ENCODE measurements at regions of chr20 and their contacts with region 1.

Region 1: GRCh38 chr20:37990571-37991151 is 42.6 kb downstream of the TTI1 start:
- DNase-seq: peak; percentile 75 to 79
- ATAC-seq: peak in 1 of 2 donors; percentile 2
- H3K4me3 ChIP-seq: no peak overlapping the region
- H3K27ac ChIP-seq: peak overlapping the region; percentile 84 to 93 (median 90)
- H3K4me1 ChIP-seq: peaks cover 91 to 94% of the 10 kb centered on the region in 2 donors
- H3K27me3 ChIP-seq: no peaks in the 10 kb centered on the region
- CTCF ChIP-seq: no peak
- POLR2A ChIP-seq: peak in 1 of 2 donors; percentile 29

Region 2: DNA sequence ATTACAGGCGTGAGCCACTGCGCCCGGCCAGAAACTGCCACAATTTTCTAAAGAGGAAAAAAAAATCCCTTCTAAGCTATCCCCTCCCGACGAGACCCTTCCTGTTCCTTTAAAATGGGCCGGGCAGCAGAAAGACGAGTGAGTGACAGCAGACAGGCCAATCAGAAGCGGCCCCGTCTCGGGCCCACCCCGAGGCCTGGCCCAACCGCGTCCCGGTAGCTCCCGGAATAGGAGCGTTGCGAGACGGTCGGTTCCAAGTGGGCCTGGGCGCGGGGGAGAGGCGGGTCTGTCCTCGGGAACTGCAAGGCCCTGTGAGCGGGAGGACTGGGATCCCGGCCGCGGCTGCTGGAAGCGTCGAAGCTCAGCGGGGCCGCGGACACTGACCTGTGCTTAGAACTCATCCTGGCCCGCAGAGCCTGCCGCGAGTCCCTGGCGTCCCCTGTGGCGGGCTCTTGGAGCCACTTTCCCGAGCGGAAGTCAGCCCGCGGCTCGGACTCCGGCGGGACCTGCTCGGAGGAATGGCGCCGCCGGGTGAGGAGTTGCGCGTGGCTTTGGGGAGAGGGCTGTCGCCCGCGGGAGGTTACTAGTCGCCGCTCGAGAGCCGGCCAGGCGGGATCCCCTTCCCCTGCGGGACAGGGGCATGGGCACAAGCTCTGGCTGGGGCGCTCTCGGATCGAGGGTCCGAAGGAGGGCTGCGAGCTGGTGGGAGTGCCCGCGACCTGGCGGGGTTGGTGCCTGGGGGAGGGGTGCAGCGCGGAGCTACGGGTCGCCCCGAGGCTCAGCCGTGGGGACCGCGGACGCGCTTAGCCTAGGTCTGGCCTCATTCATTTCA is 811.6 kb before region 1 on chr20 and contains the starts of genes MROH8 and RPN2:
- in situ Hi-C with region 1: loop called in 1 of 4 experiments (anchors 25 kb)
- intact Hi-C with region 1: no loop called
- DNase-seq: peak; percentile 97 to 98
- ATAC-seq: peak; percentile 86 to 90
- H3K4me3 ChIP-seq: peak within 1 kb of the TSS; percentile 69 to 95 (median 84)
- H3K27ac ChIP-seq: peak within 1 kb of the TSS; percentile 94 to 98 (median 98)
- H3K4me1 ChIP-seq: peaks cover 30 to 38% of the 10 kb centered on the region in 2 donors
- H3K27me3 ChIP-seq: no peaks in the 10 kb centered on the region
- CTCF ChIP-seq: peak in 1 of 5 experiments; percentile 13
- POLR2A ChIP-seq: peak; percentile 81 to 93
- total RNA-seq, gene MROH8: 1.4 to 4.4 (median 3.0) TPM
- total RNA-seq, gene RPN2: 85.7 to 132 (median 127) TPM

Region 3: GRCh38 chr20:37564388-37565133 is 426.1 kb before region 1 on chr20:
- in situ Hi-C with region 1: loop called in 2 of 4 experiments (anchors 5 to 10 kb)
- intact Hi-C with region 1: loop called (anchors 5 kb)
- DNase-seq: no peak
- ATAC-seq: peak in 1 of 2 donors; percentile 78
- H3K4me3 ChIP-seq: peak overlapping the region in 1 of 4 donors; percentile 28
- H3K27ac ChIP-seq: no peak overlapping the region
- H3K4me1 ChIP-seq: peaks cover 0 to 10% of the 10 kb centered on the region in 2 donors
- H3K27me3 ChIP-seq: peaks cover 16 to 23% (median 16%) of the 10 kb centered on the region in 3 donors
- CTCF ChIP-seq: peak; percentile 78 to 91 (median 87)
- POLR2A ChIP-seq: no peak

Region 4: DNA sequence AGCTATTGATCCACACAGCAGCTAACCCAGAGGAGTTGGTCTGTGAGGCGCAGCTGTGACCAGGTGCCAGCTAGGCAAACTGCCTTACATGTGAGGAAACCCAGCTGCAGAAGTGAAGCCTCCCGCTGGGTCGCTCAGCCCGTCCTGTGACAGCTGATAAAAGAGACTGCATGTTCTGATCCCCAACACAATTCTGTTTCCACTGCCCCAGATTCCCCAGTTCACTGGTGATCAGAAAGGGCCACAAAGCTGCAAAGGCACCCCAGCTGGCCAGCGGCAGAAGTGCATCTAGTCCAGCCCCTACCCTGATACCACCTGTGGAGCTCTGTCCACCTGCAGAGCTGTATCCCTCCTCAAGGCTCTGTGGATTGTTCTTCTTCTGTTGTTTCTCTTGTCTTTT is 232.3 kb before region 1 on chr20:
- in situ Hi-C with region 1: loop called in 1 of 4 experiments (anchors 25 kb)
- intact Hi-C with region 1: loop called (anchors 1 kb)
- DNase-seq: no peak
- ATAC-seq: no peak
- H3K4me3 ChIP-seq: no peak overlapping the region
- H3K27ac ChIP-seq: no peak overlapping the region
- H3K4me1 ChIP-seq: peaks cover 5 to 10% of the 10 kb centered on the region in 2 donors
- H3K27me3 ChIP-seq: no peaks in the 10 kb centered on the region
- CTCF ChIP-seq: no peak
- POLR2A ChIP-seq: no peak

Region 5: GRCh38 chr20:37864298-37864697 is 126.4 kb before region 1 on chr20:
- in situ Hi-C with region 1: no loop called
- intact Hi-C with region 1: no loop called
- DNase-seq: no peak
- ATAC-seq: no peak
- H3K4me3 ChIP-seq: no peak overlapping the region
- H3K27ac ChIP-seq: no peak overlapping the region
- H3K4me1 ChIP-seq: no peaks in the 10 kb centered on the region
- H3K27me3 ChIP-seq: no peaks in the 10 kb centered on the region
- CTCF ChIP-seq: no peak
- POLR2A ChIP-seq: no peak

Region 6: DNA sequence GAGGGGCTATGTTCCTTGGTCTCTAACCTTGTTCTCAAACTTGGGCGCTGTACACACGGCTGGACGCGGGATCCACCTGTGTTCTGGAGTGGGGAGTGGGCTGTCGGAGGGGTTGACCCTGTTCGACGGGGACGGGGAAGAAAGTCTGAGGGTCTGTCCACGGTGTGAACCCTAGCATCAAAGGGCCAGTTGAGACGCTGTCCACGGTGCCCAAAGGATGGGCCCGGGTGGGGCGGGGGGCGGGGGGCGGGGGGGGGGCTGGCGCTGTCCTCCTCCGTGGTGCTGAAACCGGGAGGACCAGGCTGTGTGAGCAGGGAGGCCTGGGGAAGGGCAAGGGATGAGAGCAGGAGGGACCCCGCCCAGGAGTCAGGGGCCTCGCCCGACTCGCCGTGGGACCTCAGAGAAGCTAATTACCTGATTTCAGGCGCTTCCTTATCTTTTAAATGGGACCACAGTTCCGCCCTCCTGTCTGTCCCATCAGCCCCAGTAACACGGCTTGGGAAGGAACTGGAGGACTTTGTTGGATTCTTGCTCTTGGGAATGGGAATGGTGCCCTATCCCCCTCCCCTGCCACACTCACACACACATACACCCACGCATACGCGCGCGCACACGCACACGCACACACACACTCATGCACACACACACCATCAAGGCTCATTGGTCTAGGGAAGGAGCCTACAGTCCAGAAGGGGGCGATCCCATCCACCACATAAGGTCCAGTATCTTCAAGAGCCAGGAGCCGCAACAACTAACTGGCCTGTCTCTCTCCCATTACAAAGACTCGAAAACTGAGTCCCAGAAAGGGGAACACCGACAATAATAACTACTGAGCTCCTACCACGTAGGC is 88.8 kb before region 1 on chr20:
- in situ Hi-C with region 1: no loop called
- intact Hi-C with region 1: loop called (anchors 1 kb)
- DNase-seq: peak; percentile 17 to 45
- ATAC-seq: peak; percentile 66 to 75
- H3K4me3 ChIP-seq: peak overlapping the region in 1 of 4 donors; percentile 46
- H3K27ac ChIP-seq: no peak overlapping the region
- H3K4me1 ChIP-seq: peaks cover 0 to 6% of the 10 kb centered on the region in 2 donors
- H3K27me3 ChIP-seq: peaks cover 38 to 61% (median 44%) of the 10 kb centered on the region in 3 donors
- CTCF ChIP-seq: peak in 4 of 5 experiments; percentile 25 to 68 (median 38)
- POLR2A ChIP-seq: no peak

Region 7: GRCh38 chr20:37922016-37922415 is 68.6 kb before region 1 on chr20:
- in situ Hi-C with region 1: no loop called
- intact Hi-C with region 1: no loop called
- DNase-seq: no peak
- ATAC-seq: no peak
- H3K4me3 ChIP-seq: no peak overlapping the region
- H3K27ac ChIP-seq: no peak overlapping the region
- H3K4me1 ChIP-seq: no peaks in the 10 kb centered on the region
- H3K27me3 ChIP-seq: peaks cover 13 to 28% (median 14%) of the 10 kb centered on the region in 3 donors
- CTCF ChIP-seq: no peak
- POLR2A ChIP-seq: no peak

Region 8: GRCh38 chr20:38113401-38114325 is 123.0 kb after region 1 on chr20:
- in situ Hi-C with region 1: no loop called
- intact Hi-C with region 1: loop called (anchors 5 kb)
- DNase-seq: peak; percentile 81 to 87
- ATAC-seq: peak; percentile 40 to 49
- H3K4me3 ChIP-seq: no peak overlapping the region
- H3K27ac ChIP-seq: peak overlapping the region; percentile 43 to 94 (median 68)
- H3K4me1 ChIP-seq: peaks cover 57 to 63% of the 10 kb centered on the region in 2 donors
- H3K27me3 ChIP-seq: no peaks in the 10 kb centered on the region
- CTCF ChIP-seq: peak in 1 of 5 experiments; percentile 8
- POLR2A ChIP-seq: no peak